ENCODE measurements at regions of chr17 and their contacts with region 1.

Region 1: DNA sequence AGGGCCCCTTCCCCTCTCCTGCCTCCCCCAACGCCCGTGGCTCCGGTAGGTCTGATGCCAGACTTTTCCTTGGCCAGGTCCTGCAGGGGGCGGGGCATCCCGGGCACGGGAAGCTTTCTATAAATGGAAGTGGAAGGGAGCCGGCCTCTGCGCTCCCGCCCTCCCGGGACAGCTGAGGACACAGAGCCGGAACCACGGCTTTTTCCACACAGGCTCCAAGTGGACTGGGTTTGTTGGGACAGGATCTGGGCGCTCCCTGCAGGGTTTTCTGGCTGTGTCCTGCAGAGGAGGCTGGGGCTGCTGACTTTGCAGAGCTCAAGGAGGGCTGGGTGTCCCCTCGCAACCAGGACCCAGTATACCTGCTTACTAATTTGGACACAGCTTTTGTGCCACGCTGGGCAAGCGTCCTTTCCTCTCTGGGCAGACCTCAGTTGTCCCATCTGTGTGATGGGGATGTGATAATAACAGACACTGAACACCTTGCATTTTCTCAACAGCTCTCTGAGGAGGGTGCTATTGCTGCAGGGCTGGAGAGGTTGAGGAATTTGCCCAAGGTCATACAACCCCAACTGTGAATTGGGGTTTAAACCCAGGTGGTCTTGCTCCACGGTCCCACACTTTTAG is 1.8 kb downstream of the TNS4 start:
- DNase-seq: peak; percentile 85 to 88
- ATAC-seq: peak; percentile 77 to 80
- H3K4me3 ChIP-seq: peak overlapping the region; percentile 60
- H3K27ac ChIP-seq: peak overlapping the region; percentile 96 to 97
- H3K4me1 ChIP-seq: peaks cover 71% of the 10 kb centered on the region
- CTCF ChIP-seq: no peak
- EP300 ChIP-seq: no peak
- POLR2A ChIP-seq: peak; percentile 74
- RAD21 ChIP-seq: peak; percentile 16 to 28; a peak in 2 of 5 replicates

Region 2: GRCh38 chr17:40230670-40231069 is 269.0 kb before region 1 on chr17:
- CTCF ChIA-PET with region 1: no interaction called
- POLR2A ChIA-PET with region 1: no interaction called
- DNase-seq: no peak
- ATAC-seq: no peak
- H3K4me3 ChIP-seq: no peak overlapping the region
- H3K27ac ChIP-seq: no peak overlapping the region
- H3K4me1 ChIP-seq: no peaks in the 10 kb centered on the region
- CTCF ChIP-seq: no peak
- EP300 ChIP-seq: no peak
- POLR2A ChIP-seq: no peak
- RAD21 ChIP-seq: no peak

Region 3: DNA sequence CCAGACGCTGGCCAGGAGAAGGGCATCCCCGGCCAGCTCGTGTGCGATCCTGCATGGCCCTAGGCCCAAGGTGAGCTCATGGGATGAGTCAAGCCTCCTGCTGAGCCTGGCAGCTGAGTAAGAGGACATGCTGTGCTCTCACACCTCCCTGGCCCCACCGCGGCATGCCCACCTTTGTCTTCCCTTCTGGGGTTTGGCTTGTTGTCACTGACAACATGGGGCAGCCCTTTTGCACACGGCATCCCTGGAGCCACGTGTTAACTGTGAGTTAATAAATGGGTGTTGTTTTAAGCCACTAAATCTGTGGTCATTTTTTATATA is 10.6 kb after region 1 on chr17:
- CTCF ChIA-PET with region 1: interaction called, 17 read pairs
- POLR2A ChIA-PET with region 1: interaction called, 4 read pairs
- DNase-seq: peak; percentile 90 to 96
- ATAC-seq: peak; percentile 92 to 94
- H3K4me3 ChIP-seq: no peak overlapping the region
- H3K27ac ChIP-seq: peak overlapping the region; percentile 97 to 99
- H3K4me1 ChIP-seq: peaks cover 54% of the 10 kb centered on the region
- CTCF ChIP-seq: no peak
- EP300 ChIP-seq: peak; percentile 79 to 88; a peak in 3 of 5 replicates
- POLR2A ChIP-seq: no peak
- RAD21 ChIP-seq: peak in 1 of 2 experiments; percentile 25; a peak in 1 of 5 replicates

Region 4: DNA sequence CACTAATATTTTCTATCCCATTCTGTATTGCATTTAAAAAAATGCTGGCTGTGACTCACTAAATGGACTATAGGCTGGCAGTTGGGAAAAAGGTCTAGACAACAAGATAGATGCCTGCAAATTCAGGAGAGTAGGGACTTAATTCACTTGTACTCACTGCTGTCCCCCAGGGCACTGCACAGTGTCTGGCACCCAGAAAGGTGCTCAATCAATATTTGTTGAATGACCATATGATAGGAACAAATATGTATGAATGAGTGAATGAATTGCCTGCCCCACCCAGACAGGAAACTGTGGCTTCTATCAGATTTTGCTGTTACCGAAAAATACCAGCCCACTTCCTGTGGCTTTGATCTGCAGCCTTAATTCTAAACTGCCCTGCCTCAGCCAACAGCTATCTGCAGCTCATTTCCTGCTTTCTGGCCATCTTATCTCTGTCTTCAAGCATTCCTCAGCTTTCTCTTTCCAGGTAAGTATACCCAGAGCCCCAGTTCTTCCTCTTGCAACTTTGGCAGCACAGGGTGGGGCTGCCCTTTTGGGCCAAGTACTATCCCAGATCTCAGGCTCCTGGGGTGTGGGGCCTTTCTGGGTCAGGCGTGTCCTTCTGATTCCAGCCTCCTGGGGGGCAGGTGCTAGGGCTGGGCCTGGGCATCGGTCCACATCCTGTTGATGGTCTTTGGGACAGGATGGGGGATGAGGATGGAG is 17.1 kb after region 1 on chr17:
- CTCF ChIA-PET with region 1: interaction called, 22 read pairs
- POLR2A ChIA-PET with region 1: interaction called, 5 read pairs
- DNase-seq: peak; percentile 74 to 85
- ATAC-seq: peak in 1 of 2 experiments; percentile 1; a peak in 2 of 6 replicates
- H3K4me3 ChIP-seq: no peak overlapping the region
- H3K27ac ChIP-seq: peak overlapping the region; percentile 97 to 99
- H3K4me1 ChIP-seq: peaks cover 74% of the 10 kb centered on the region
- CTCF ChIP-seq: no peak
- EP300 ChIP-seq: peak; percentile 69 to 92; a peak in 3 of 5 replicates
- POLR2A ChIP-seq: no peak
- RAD21 ChIP-seq: peak in 1 of 2 experiments; percentile 18; a peak in 1 of 5 replicates

Measured in A549 (cell line).